Mammary epithelial cell (primary cell): ENCODE measurements at regions of chr1 and their contacts with region 1.

Region 1: GRCh38 chr1:35298464-35298863 is 30.0 kb downstream of the ZMYM4 start:
- DNase-seq: peak; percentile 57
- H3K4me3 ChIP-seq: no peak overlapping the region
- H3K27ac ChIP-seq: no peak overlapping the region
- H3K4me1 ChIP-seq: no peaks in the 10 kb centered on the region
- H3K27me3 ChIP-seq: no peaks in the 10 kb centered on the region
- CTCF ChIP-seq: peak; percentile 38 to 57

Region 2: DNA sequence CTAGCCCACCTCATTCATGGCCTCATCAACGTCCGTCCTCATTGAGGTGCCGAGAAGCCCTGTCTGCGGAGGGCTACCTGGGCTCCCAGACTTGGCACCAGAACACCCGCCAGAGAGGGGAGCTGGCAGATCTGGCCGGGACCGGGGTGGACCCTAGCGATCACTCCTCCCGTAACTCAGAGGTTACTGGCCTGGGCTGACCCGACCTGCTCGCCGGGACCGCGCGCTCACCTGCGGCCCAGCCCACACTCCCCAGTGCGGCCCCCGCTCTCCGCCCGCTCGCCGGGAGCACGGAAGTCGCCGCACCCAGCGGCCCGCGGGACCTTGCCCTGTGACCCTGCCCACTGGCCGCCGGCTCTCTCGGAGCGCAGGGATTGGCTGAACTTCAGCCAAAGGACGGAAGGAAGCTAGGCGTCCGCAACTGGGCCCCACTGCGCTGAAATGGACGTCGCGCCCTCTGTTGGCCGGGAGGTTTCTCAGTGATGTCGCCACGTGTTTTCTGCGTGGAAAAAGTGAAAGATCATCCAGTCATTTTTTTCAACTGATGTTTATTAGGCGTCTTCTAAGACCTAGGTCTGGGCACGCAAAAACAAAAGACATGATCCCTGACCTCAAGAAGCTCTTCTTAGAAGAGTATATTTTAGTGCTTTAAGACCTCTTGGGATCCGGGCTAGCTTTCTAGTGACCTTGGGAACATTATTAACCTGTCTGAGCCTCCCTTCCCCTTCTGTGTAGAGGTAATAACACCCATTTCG is 438.8 kb before region 1 on chr1 and contains the start of gene SMIM12:
- CTCF ChIA-PET with region 1: interaction called, 25 read pairs
- dilution Hi-C with region 1: no loop called
- in situ Hi-C with region 1: no loop called
- intact Hi-C with region 1: no loop called
- DNase-seq: peak; percentile 87
- H3K4me3 ChIP-seq: peak within 1 kb of the TSS; percentile 93 to 99 (median 98)
- H3K27ac ChIP-seq: peak within 1 kb of the TSS; percentile 66
- H3K4me1 ChIP-seq: peaks cover 11% of the 10 kb centered on the region
- H3K27me3 ChIP-seq: no peaks in the 10 kb centered on the region
- CTCF ChIP-seq: peak; percentile 68 to 85
- total RNA-seq, gene SMIM12: 46.7 to 54.5 TPM

Region 3: GRCh38 chr1:35202048-35202719 is 96.3 kb before region 1 on chr1:
- CTCF ChIA-PET with region 1: no interaction called
- dilution Hi-C with region 1: no loop called
- in situ Hi-C with region 1: loop called in 1 of 2 experiments (anchors 10 kb)
- intact Hi-C with region 1: loop called (anchors 1 kb)
- DNase-seq: peak; percentile 70
- H3K4me3 ChIP-seq: no peak overlapping the region
- H3K27ac ChIP-seq: no peak overlapping the region
- H3K4me1 ChIP-seq: no peaks in the 10 kb centered on the region
- H3K27me3 ChIP-seq: no peaks in the 10 kb centered on the region
- CTCF ChIP-seq: peak; percentile 86 to 93